Gastrocnemius medialis (tissue), 4 donors: ENCODE measurements at regions of chr7 and their contacts with region 1.

Region 1: GRCh38 chr7:35716038-35716803 is 21.3 kb upstream of the HERPUD2 start:
- DNase-seq: peak; percentile 31 to 57
- ATAC-seq: peak; percentile 82 to 90
- H3K4me3 ChIP-seq: peak overlapping the region; percentile 28 to 35 (median 30)
- H3K27ac ChIP-seq: peak overlapping the region; percentile 48 to 75 (median 70)
- H3K4me1 ChIP-seq: peaks cover 19 to 47% of the 10 kb centered on the region in 2 donors
- H3K27me3 ChIP-seq: no peaks in the 10 kb centered on the region
- CTCF ChIP-seq: no peak
- POLR2A ChIP-seq: no peak

Region 2: GRCh38 chr7:35753761-35754603 is 37.8 kb after region 1 on chr7:
- in situ Hi-C with region 1: no loop called
- intact Hi-C with region 1: loop called (anchors 5 kb)
- DNase-seq: peak; percentile 15 to 56
- ATAC-seq: peak; percentile 74 to 94
- H3K4me3 ChIP-seq: peak overlapping the region in 1 of 4 donors; percentile 4
- H3K27ac ChIP-seq: peak overlapping the region; percentile 64 to 78 (median 76)
- H3K4me1 ChIP-seq: peaks cover 21 to 34% of the 10 kb centered on the region in 2 donors
- H3K27me3 ChIP-seq: no peaks in the 10 kb centered on the region
- CTCF ChIP-seq: no peak
- POLR2A ChIP-seq: no peak

Region 3: DNA sequence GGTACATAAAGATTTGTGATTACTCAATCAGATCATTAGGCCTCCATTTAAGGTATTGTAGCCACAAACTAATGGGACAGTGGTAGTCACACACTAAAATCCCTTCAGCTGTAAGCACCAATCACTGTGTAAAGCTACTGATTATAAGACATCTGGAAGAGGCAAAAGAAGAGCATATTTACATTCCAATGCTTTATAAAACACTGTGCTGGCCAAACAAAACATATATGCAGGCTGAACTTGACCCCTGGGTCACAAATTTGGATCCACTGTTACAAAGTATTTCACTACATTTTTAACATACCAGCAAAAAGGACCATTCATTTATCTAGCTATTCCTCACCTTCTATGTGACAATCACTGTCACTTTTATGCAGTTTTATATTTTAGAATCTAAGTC is 632.0 kb after region 1 on chr7:
- in situ Hi-C with region 1: loop called in 1 of 4 experiments (anchors 25 kb)
- intact Hi-C with region 1: no loop called
- DNase-seq: no peak
- ATAC-seq: no peak
- H3K4me3 ChIP-seq: no peak overlapping the region
- H3K27ac ChIP-seq: no peak overlapping the region
- H3K4me1 ChIP-seq: no peaks in the 10 kb centered on the region
- H3K27me3 ChIP-seq: no peaks in the 10 kb centered on the region
- CTCF ChIP-seq: no peak
- POLR2A ChIP-seq: no peak